Activated CD4-positive, alpha-beta T cell treated with anti-CD3 and anti-CD28 coated beads for 36 hours (primary cell): ENCODE measurements at regions of chr9 and their contacts with region 1.

Region 1: DNA sequence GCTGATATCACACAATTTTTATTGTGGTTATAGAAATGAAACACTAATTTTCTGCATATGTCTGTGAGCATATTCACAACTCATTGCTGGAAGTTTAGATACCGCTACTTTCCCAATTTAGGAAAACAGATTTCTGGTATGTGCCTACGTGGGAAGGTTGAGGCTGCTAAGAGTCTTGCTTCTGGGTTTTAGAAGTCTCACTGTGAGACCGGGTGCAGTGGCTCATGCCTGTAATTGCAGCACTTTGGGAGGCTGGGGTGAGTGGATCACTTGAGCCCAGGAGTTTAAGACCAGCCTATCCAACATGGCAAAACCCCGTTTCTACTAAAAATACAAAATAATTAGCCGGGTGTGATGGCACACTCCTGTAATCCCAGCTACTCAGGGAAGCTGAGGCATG is 39.6 kb downstream of the UBAP1 start:
- DNase-seq: no peak
- ATAC-seq: no peak
- H3K4me3 Mint-ChIP-seq: no peak overlapping the region
- H3K27ac Mint-ChIP-seq: no peak overlapping the region
- H3K4me1 Mint-ChIP-seq: peaks cover 8% of the 10 kb centered on the region
- H3K27me3 Mint-ChIP-seq: no peaks in the 10 kb centered on the region

Region 2: DNA sequence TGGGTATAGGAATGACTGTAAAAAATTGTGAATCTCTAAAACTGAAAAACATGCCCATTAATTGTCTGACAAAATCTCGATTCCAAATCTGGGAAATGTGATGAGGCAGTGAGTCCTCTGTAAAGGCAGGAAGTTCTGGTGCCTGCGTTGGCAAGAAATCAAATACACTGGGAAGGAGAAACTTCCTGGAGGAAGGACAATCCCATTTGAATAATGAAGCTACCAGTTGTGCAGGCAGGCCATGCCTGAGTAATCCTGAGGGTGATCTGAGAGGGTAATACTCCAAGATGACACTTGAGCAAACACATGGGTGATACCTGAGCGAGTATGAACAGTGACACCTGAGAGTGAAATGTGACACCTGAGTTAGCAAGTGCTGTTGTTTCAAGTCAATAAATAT is 61.0 kb after region 1 on chr9:
- CTCF ChIA-PET with region 1: no interaction called
- POLR2A ChIA-PET with region 1: no interaction called
- intact Hi-C with region 1: loop called in 1 of 2 experiments (anchors 10 kb)
- DNase-seq: no peak
- ATAC-seq: no peak
- H3K4me3 Mint-ChIP-seq: no peak overlapping the region
- H3K27ac Mint-ChIP-seq: no peak overlapping the region
- H3K4me1 Mint-ChIP-seq: peaks cover 4% of the 10 kb centered on the region
- H3K27me3 Mint-ChIP-seq: no peaks in the 10 kb centered on the region

Region 3: GRCh38 chr9:34479431-34479866 is 261.0 kb after region 1 on chr9:
- CTCF ChIA-PET with region 1: no interaction called
- POLR2A ChIA-PET with region 1: no interaction called
- intact Hi-C with region 1: no loop called
- DNase-seq: no peak
- ATAC-seq: no peak
- H3K4me3 Mint-ChIP-seq: no peak overlapping the region
- H3K27ac Mint-ChIP-seq: no peak overlapping the region
- H3K4me1 Mint-ChIP-seq: no peaks in the 10 kb centered on the region
- H3K27me3 Mint-ChIP-seq: peaks cover 12% of the 10 kb centered on the region